ENCODE measurements at regions of chr17 and their contacts with region 1.

Region 1: GRCh38 chr17:49997791-49998703 is 3.0 kb upstream of the DLX3 start:
- DNase-seq: peak; percentile 89 to 92 (median 90)
- H3K4me3 ChIP-seq: no peak overlapping the region
- H3K27ac ChIP-seq: no peak overlapping the region
- H3K4me1 ChIP-seq: peaks cover 0 to 30% (median 21%) of the 10 kb centered on the region in 4 experiments
- H3K27me3 ChIP-seq: peaks cover 11 to 88% (median 53%) of the 10 kb centered on the region in 5 experiments

Region 2: GRCh38 chr17:49869038-49869374 is 129.0 kb before region 1 on chr17:
- CTCF ChIA-PET with region 1: interaction called, 172 read pairs
- POLR2A ChIA-PET with region 1: no interaction called
- DNase-seq: no peak
- H3K4me3 ChIP-seq: no peak overlapping the region
- H3K27ac ChIP-seq: no peak overlapping the region
- H3K4me1 ChIP-seq: peaks cover 0 to 15% (median 2%) of the 10 kb centered on the region in 4 experiments
- H3K27me3 ChIP-seq: peaks cover 0 to 4% (median 0%) of the 10 kb centered on the region in 5 experiments

Region 3: GRCh38 chr17:49899191-49899485 is 98.9 kb before region 1 on chr17:
- CTCF ChIA-PET with region 1: interaction called, 49 read pairs
- POLR2A ChIA-PET with region 1: no interaction called
- DNase-seq: peak; percentile 17 to 43 (median 41)
- H3K4me3 ChIP-seq: no peak overlapping the region
- H3K27ac ChIP-seq: no peak overlapping the region
- H3K4me1 ChIP-seq: peaks cover 0 to 8% (median 4%) of the 10 kb centered on the region in 4 experiments
- H3K27me3 ChIP-seq: peaks cover 6 to 75% (median 41%) of the 10 kb centered on the region in 5 experiments

Region 4: DNA sequence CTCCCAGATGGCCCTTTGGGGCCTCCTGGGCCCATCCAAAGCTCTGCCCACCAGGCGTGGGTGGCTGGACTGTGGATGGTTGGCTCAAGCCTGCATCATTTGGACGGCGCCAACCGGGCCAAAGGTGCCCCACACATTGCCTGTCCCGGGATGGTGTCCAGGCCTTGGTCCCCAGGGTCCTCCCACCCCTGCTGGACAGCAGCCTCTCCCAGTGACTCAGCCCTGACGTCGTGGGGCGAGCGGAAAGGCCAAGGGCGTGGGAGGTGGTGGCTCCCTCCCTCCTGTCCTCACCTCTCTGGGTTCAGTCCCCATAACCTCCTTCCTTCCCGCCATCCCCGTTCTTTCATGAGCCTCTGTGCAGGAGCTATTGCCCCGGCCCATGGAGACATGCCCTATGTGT is 71.2 kb before region 1 on chr17:
- CTCF ChIA-PET with region 1: interaction called, 12 read pairs
- POLR2A ChIA-PET with region 1: no interaction called
- DNase-seq: no peak
- H3K4me3 ChIP-seq: no peak overlapping the region
- H3K27ac ChIP-seq: no peak overlapping the region
- H3K4me1 ChIP-seq: peaks cover 0 to 8% (median 3%) of the 10 kb centered on the region in 4 experiments
- H3K27me3 ChIP-seq: peaks cover 0 to 27% (median 13%) of the 10 kb centered on the region in 5 experiments

Region 5: DNA sequence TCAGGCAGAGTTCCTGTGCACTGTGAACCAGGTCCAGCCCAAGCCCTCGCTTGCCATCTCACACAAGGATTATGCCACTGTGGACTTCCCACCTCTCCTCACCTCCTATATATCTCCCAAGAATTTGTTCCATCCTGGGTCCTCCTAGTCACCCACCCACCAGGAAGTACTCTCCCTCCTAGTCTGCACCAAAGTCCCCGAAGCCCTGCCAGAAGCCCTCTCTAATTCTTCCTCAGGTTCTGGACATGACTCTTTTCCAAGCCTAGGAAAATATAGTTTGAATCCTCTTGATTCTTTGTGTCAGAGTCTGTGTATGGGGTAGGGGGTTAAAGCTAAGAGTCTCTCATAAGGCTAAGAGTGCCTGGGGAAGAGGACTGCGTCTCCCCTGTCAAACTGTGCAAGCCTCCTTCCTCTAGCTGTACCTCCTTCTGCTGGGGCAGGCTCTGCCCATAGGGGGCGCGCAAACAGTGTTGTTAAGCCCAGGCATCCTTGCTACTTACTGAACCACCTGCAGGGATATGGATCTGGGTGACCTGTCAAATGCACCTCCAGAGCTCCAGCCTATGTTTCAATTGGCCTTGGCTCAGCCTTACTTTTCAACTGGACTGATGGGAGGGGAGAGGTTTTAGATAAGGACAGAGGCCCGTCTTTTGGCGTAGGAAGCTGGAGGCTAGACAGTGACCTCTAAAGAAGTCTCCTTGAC is 45.7 kb before region 1 on chr17:
- CTCF ChIA-PET with region 1: interaction called, 91 read pairs
- POLR2A ChIA-PET with region 1: no interaction called
- DNase-seq: peak; percentile 72 to 86 (median 83)
- H3K4me3 ChIP-seq: no peak overlapping the region
- H3K27ac ChIP-seq: no peak overlapping the region
- H3K4me1 ChIP-seq: no peaks in the 10 kb centered on the region
- H3K27me3 ChIP-seq: peaks cover 0 to 39% (median 26%) of the 10 kb centered on the region in 5 experiments

Region 6: GRCh38 chr17:49980703-49981197 is 17.3 kb before region 1 on chr17:
- CTCF ChIA-PET with region 1: interaction called, 52 read pairs
- POLR2A ChIA-PET with region 1: no interaction called
- DNase-seq: no peak
- H3K4me3 ChIP-seq: no peak overlapping the region
- H3K27ac ChIP-seq: no peak overlapping the region
- H3K4me1 ChIP-seq: no peaks in the 10 kb centered on the region
- H3K27me3 ChIP-seq: peaks cover 0 to 38% (median 20%) of the 10 kb centered on the region in 5 experiments

Region 7: GRCh38 chr17:50087246-50087911 is 89.3 kb after region 1 on chr17:
- CTCF ChIA-PET with region 1: interaction called, 10 read pairs
- POLR2A ChIA-PET with region 1: no interaction called
- DNase-seq: peak; percentile 51 to 73 (median 72)
- H3K4me3 ChIP-seq: no peak overlapping the region
- H3K27ac ChIP-seq: no peak overlapping the region
- H3K4me1 ChIP-seq: no peaks in the 10 kb centered on the region
- H3K27me3 ChIP-seq: no peaks in the 10 kb centered on the region

Region 8: GRCh38 chr17:50114849-50115357 is 116.9 kb after region 1 on chr17:
- CTCF ChIA-PET with region 1: no interaction called
- POLR2A ChIA-PET with region 1: no interaction called
- DNase-seq: peak; percentile 72 to 85 (median 85)
- H3K4me3 ChIP-seq: no peak overlapping the region
- H3K27ac ChIP-seq: no peak overlapping the region
- H3K4me1 ChIP-seq: peaks cover 0 to 23% (median 17%) of the 10 kb centered on the region in 4 experiments
- H3K27me3 ChIP-seq: no peaks in the 10 kb centered on the region

Region 9: GRCh38 chr17:50210240-50211225 is 212.5 kb after region 1 on chr17:
- CTCF ChIA-PET with region 1: no interaction called
- POLR2A ChIA-PET with region 1: no interaction called
- DNase-seq: no peak
- H3K4me3 ChIP-seq: no peak overlapping the region
- H3K27ac ChIP-seq: no peak overlapping the region
- H3K4me1 ChIP-seq: peaks cover 0 to 12% (median 6%) of the 10 kb centered on the region in 4 experiments
- H3K27me3 ChIP-seq: peaks cover 0 to 14% (median 4%) of the 10 kb centered on the region in 5 experiments

Measured in common myeloid progenitor, CD34-positive (primary cell).